Heart right ventricle (tissue), 16 donors: ENCODE measurements at regions of chr4 and their contacts with region 1.

Region 1: GRCh38 chr4:121252224-121252806 is 88.2 kb upstream of the TNIP3 start:
- DNase-seq: peak; percentile 32 to 39
- ATAC-seq: peak in 5 of 8 donors; percentile 38 to 80 (median 72)
- H3K4me3 ChIP-seq: no peak overlapping the region
- H3K27ac ChIP-seq: no peak overlapping the region
- H3K4me1 ChIP-seq: peaks cover 0 to 17% (median 0%) of the 10 kb centered on the region in 9 donors
- H3K27me3 ChIP-seq: no peaks in the 10 kb centered on the region
- CTCF ChIP-seq: peak; percentile 52 to 87 (median 82)

Region 2: DNA sequence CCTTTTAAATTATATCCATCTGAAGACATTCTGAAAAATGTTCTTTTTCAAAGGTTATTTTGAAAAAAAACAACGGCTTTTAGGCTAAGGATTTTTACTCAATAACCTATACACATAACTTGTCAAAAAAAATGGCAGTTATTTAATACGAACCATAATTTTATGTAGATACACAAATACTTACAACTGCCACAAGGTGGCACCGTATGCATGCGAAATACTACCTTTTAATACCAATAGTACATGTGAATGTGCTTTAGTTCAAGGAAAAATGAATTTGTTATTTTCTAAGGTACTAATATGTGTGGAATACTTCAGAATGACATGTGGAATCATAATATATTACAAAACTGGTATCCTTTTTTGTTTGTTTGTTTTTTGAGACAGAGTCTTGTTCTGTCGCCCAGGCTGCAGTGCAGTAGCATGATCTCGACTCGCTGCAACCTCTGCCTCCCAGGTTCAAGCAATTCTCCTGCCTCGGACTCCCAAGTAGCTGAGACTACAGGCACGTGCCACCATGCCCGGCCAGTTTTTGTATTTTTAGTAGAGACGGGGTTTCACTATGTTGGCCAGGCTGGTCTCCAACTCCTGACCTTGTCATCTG is 1181.0 kb before region 1 on chr4:
- intact Hi-C with region 1: loop called in 1 of 10 experiments (anchors 10 kb)
- DNase-seq: no peak
- ATAC-seq: no peak
- H3K4me3 ChIP-seq: no peak overlapping the region
- H3K27ac ChIP-seq: no peak overlapping the region
- H3K4me1 ChIP-seq: peaks cover 0 to 37% (median 27%) of the 10 kb centered on the region in 9 donors
- H3K27me3 ChIP-seq: no peaks in the 10 kb centered on the region
- CTCF ChIP-seq: peak; percentile 54 to 80 (median 60)

Region 3: DNA sequence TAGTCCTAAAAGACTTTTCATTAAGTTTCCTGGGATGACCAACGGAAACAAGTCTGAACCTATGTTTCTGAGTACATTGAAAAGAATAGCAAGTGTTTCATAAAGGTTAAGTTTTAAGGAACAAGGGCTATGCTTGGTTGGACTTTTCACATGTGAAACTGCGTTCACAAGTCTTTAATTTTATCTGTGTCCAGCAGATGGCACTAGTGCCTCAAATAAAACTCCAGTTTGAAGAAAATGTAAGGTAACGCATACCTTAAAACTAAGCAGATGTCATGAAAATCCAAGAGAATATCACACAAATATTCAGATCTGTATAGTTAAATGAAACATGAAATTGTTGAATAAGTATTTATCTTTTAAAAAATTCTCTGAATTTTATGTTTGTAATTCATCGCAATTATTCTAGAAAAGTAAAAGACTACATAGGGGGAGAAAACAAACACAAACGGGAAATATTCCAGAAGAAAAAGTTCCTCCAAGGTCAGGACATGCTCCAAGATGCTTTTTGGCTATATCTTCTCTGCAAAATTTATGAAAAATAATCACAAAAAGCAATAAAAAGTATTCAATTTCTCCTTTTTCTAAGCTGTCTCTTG is 1096.1 kb before region 1 on chr4:
- intact Hi-C with region 1: loop called in 8 of 10 experiments (anchors 5 to 10 kb)
- DNase-seq: peak in 1 of 2 donors; percentile 19
- ATAC-seq: peak in 1 of 8 donors; percentile 52
- H3K4me3 ChIP-seq: no peak overlapping the region
- H3K27ac ChIP-seq: no peak overlapping the region
- H3K4me1 ChIP-seq: no peaks in the 10 kb centered on the region
- H3K27me3 ChIP-seq: no peaks in the 10 kb centered on the region
- CTCF ChIP-seq: peak; percentile 44 to 80 (median 69)

Region 4: DNA sequence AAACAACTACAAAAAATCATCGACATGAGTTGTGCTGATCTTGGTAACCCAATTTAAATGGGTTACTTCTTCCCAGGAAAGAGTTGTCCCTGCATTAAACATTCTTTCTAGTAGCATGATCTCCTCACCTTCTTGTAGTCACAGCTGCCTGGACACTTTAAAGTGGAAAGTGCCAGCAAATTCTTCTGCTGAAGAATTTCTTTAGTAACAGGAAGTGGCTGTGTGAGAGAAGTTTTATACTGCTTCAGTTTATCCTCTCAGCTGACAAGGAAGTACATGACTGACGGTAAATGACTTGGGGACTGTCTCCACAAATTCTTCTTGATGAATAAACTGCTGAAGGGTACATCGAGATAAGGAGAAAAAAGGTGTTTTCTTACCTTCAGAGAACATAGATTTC is 70.0 kb before region 1 on chr4:
- intact Hi-C with region 1: no loop called
- DNase-seq: no peak
- ATAC-seq: no peak
- H3K4me3 ChIP-seq: peak overlapping the region in 1 of 10 donors; percentile 35
- H3K27ac ChIP-seq: peak overlapping the region in 1 of 10 donors; percentile 81
- H3K4me1 ChIP-seq: peaks cover 0 to 20% (median 0%) of the 10 kb centered on the region in 9 donors
- H3K27me3 ChIP-seq: peaks cover 0 to 11% (median 0%) of the 10 kb centered on the region in 7 donors
- CTCF ChIP-seq: no peak

Region 5: DNA sequence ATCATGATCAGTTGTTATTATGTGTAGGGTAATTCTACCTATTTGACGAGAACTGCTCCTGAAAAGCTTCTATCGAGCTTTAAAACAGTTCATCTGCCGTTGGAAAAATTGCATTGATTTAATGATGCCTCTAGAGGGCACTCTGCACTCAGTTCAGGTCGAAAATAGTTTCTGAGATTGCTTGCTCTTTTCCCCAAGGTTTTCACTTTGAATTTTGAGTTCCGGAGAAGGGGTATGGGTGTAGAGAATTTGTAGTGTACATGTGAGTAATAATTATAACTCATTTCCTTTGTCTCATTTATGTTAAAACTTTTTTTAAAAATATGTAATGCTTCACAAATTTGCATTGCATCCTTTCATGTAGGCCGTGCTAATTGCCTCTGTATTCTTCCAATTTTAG is 59.8 kb before region 1 on chr4:
- intact Hi-C with region 1: loop called (anchors 1 to 10 kb)
- DNase-seq: no peak
- ATAC-seq: no peak
- H3K4me3 ChIP-seq: peak overlapping the region in 1 of 10 donors; percentile 1
- H3K27ac ChIP-seq: no peak overlapping the region
- H3K4me1 ChIP-seq: peaks cover 0 to 8% (median 0%) of the 10 kb centered on the region in 9 donors
- H3K27me3 ChIP-seq: peaks cover 0 to 12% (median 0%) of the 10 kb centered on the region in 7 donors
- CTCF ChIP-seq: peak; percentile 32 to 82 (median 75)